Activated CD8-positive, alpha-beta T cell treated with anti-CD3 and anti-CD28 coated beads, Interleukin-2, amount 10 ng/mL, durations not matched to agents 7 days and 5 days (primary cell): ENCODE measurements at regions of chr2 and their contacts with region 1.

Region 1: GRCh38 chr2:10043906-10044601 is 704 bp downstream of the KLF11 start:
- DNase-seq: peak; percentile 94
- ATAC-seq: peak; percentile 74
- H3K4me3 Mint-ChIP-seq: peak overlapping the region; percentile 72
- H3K27ac Mint-ChIP-seq: peak overlapping the region; percentile 85
- H3K4me1 Mint-ChIP-seq: peaks cover 24% of the 10 kb centered on the region
- H3K27me3 Mint-ChIP-seq: peaks cover 23% of the 10 kb centered on the region

Region 2: DNA sequence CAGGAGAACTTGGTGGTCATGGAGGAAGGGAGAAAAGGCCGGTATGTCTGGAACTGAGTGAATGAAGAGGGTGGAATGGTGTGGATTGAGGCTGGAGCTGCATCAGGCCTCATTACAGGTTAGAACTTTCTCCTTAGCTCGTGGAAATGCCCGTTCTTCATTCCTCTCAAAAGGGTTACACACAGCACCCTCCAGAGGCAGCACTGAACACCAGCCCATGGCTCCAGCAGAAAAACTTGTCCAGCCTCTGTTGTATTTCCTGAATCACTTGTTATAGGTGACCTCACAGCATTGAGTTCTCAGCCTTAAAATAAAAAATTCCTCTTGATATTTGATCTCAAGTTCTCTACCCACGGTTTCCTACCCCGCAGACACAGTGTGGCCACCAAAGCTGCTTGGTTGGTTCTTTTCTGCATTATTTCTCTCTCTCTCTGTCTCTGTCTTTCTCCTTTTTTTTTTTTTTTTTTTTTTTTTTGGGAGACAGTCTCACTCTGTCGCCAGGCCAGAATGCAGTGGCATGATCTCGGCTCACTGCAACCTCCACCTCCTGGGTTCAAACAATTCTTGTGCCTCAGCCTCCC is 710.4 kb before region 1 on chr2:
- CTCF ChIA-PET with region 1: no interaction called
- POLR2A ChIA-PET with region 1: no interaction called
- DNase-seq: no peak
- ATAC-seq: no peak
- H3K4me3 Mint-ChIP-seq: no peak overlapping the region
- H3K27ac Mint-ChIP-seq: no peak overlapping the region
- H3K4me1 Mint-ChIP-seq: peaks cover 2% of the 10 kb centered on the region
- H3K27me3 Mint-ChIP-seq: peaks cover 15% of the 10 kb centered on the region

Region 3: GRCh38 chr2:9770308-9771100 is 273.6 kb before region 1 on chr2:
- CTCF ChIA-PET with region 1: interaction called, 11 read pairs
- POLR2A ChIA-PET with region 1: no interaction called
- DNase-seq: peak; percentile 69
- ATAC-seq: peak; percentile 69
- H3K4me3 Mint-ChIP-seq: no peak overlapping the region
- H3K27ac Mint-ChIP-seq: peak overlapping the region; percentile 60
- H3K4me1 Mint-ChIP-seq: peaks cover 9% of the 10 kb centered on the region
- H3K27me3 Mint-ChIP-seq: peaks cover 8% of the 10 kb centered on the region

Region 4: GRCh38 chr2:9799665-9800632 is 244.1 kb before region 1 on chr2:
- CTCF ChIA-PET with region 1: interaction called, 40 read pairs
- POLR2A ChIA-PET with region 1: no interaction called
- DNase-seq: peak; percentile 91
- ATAC-seq: peak; percentile 96
- H3K4me3 Mint-ChIP-seq: peak overlapping the region; percentile 60
- H3K27ac Mint-ChIP-seq: peak overlapping the region; percentile 88
- H3K4me1 Mint-ChIP-seq: peaks cover 38% of the 10 kb centered on the region
- H3K27me3 Mint-ChIP-seq: peaks cover 4% of the 10 kb centered on the region

Region 5: GRCh38 chr2:9951272-9951972 is 92.6 kb before region 1 on chr2 and contains the start of gene GRHL1:
- CTCF ChIA-PET with region 1: no interaction called
- POLR2A ChIA-PET with region 1: no interaction called
- DNase-seq: peak; percentile 90
- ATAC-seq: peak; percentile 97
- H3K4me3 Mint-ChIP-seq: peak within 1 kb of the TSS; percentile 79
- H3K27ac Mint-ChIP-seq: no peak within 1 kb of the TSS
- H3K4me1 Mint-ChIP-seq: peaks cover 7% of the 10 kb centered on the region
- H3K27me3 Mint-ChIP-seq: peaks cover 52% of the 10 kb centered on the region
- total RNA-seq, gene GRHL1: 0.55 to 0.57 TPM

Region 6: DNA sequence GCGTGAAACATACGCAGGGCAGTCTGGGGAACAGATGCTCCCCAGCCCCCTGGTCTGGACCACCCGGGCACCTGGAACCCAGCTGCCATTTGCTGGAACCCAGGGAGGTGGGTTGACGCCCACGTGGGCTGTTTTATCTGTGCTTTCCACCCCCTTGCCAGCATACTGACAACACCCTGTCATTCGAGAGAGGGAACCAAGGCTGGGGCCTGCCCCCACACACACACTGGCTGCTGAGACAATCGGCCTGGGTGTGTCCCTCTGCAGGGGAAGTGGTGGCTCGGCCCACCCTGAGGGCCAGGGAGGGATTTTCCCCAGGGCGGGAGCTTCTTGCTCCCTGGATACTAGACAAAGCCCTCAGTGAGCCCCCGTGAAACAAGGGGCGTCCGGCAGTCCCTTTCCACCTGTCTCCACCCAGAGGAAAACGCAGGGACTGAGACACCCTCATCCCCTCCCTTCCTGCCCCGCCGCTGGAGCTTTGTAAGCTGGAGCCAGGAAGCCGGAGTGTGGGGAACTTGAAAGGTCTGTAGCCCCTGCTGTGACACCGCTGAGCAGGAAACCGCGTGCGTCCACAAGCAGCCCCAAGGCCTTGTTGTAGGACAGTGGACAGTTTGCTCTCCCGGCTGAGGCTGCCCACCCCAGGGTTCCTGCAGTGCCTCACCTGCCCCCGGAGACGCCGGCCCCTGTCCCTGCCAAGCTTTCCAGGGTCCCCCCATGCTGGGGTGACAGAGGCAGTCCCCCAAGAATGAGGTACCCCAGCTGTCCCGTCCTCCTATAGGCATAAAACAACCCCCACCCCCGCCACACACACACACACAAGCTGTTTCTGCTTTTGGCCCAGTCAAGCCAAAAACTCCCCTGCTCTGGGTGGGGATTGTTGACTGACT is 14.8 kb before region 1 on chr2:
- CTCF ChIA-PET with region 1: interaction called, 22 read pairs
- POLR2A ChIA-PET with region 1: interaction called, 17 read pairs
- DNase-seq: peak; percentile 77
- ATAC-seq: peak; percentile 90
- H3K4me3 Mint-ChIP-seq: peak overlapping the region; percentile 64
- H3K27ac Mint-ChIP-seq: peak overlapping the region; percentile 79
- H3K4me1 Mint-ChIP-seq: peaks cover 28% of the 10 kb centered on the region
- H3K27me3 Mint-ChIP-seq: no peaks in the 10 kb centered on the region

Region 7: DNA sequence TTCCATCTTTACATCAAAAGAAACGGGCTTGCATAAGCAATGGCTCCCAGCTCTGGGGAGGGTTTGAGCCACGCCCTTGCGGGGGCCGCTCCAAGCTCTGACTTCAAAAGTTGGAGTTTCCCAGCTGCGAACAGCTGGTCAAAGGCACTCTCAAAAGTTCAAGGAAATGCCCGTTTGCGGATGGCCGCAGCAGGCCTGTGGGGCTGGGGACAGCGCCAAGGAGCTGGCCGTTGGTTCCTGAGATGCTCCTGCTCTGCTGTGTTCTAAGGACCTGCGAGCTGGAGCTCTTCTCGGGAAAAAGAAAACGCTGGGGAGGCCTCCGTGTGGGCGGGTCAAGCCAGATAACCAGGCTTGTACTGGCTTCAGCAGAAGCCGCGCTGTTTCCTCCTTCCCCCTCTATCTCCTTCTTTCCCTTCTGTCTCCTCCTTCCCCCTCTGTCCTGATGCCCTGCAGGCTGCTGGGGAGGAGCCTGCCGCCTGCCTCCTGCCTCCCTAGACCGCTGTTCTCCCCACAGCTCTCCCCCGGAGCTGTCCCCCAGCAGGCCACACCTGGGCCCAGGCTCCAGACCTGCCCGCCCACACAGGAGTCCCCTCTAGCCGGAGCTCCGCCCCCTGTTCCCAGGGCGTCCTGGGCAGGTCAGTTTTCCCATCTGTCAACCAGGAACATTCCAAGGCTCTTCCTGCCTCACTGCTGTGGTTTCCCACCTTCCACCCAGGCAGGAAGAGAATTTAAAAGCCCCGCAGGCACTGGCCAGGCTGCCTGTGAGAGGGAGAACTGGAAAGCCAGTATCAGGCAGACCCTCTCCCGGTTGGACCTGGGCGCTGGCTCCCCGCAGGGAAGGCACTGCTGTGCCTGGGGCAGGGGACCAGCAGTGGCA is 13.4 kb after region 1 on chr2:
- CTCF ChIA-PET with region 1: interaction called, 16 read pairs
- POLR2A ChIA-PET with region 1: no interaction called
- DNase-seq: no peak
- ATAC-seq: no peak
- H3K4me3 Mint-ChIP-seq: no peak overlapping the region
- H3K27ac Mint-ChIP-seq: no peak overlapping the region
- H3K4me1 Mint-ChIP-seq: peaks cover 4% of the 10 kb centered on the region
- H3K27me3 Mint-ChIP-seq: peaks cover 3% of the 10 kb centered on the region